SK-N-SH (cell line): ENCODE measurements at regions of chr14 and their contacts with region 1.

Region 1: DNA sequence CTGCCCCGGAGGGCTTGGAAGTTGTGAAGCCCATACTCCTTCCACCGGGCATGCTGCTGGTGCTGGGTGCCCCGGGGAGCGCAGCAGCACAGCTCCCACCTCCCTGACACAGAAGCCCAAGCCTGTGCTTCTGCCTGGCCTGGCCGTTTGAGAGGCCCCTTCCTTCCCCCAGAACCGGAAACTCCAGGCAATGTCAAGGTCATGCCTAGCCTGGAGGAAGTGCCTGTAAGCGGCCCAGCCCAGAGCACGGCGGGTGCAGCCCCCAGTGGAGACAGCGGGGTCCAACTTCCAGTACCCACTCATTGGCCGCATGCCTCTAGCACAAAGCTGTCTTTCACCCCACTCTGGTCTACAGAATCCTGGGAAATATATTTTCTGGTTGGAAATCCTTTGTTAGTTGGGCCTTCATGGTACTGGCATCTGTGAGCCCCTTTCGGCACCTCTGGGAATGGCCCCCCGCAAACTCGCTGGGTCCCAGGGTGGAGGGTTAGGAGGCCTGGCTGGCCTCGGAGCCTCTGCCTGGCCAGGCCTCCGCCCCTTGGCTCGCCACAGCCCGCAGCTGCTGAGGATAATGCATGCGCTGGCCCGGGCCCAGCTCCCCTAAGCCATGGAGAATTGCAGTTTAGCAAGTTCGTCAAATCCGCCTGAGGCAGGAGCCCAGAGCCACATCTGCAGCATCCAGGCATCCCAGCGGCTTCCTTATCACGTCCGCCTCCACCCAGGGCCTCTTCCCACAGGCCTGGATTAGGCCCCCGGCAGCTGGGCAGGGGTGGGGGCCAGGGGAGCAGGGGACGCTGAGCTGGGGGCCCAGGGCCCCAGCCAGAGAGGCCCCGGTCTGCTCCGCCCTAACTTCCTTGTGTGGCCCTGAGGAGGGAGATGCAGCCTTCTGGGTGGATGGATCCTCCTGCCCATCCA is 48.9 kb upstream of the DLK1 start:
- DNase-seq: peak; percentile 89
- H3K4me3 ChIP-seq: no peak overlapping the region
- H3K27ac ChIP-seq: peak overlapping the region in 1 of 2 experiments; percentile 99; a peak in 3 of 4 replicates
- H3K4me1 ChIP-seq: peaks cover 0 to 97% of the 10 kb centered on the region in 2 experiments; a peak in 2 of 4 replicates
- H3K27me3 ChIP-seq: no peaks in the 10 kb centered on the region
- CTCF ChIP-seq: no peak
- EP300 ChIP-seq: peak in 1 of 2 experiments; percentile 77; a peak in 2 of 4 replicates
- RAD21 ChIP-seq: peak; percentile 2; the same call in 1 of the 2 replicates

Region 2: GRCh38 chr14:100392356-100392755 is 285.5 kb before region 1 on chr14:
- CTCF ChIA-PET with region 1: interaction called, 3 read pairs
- POLR2A ChIA-PET with region 1: interaction called, 11 read pairs
- DNase-seq: no peak
- H3K4me3 ChIP-seq: no peak overlapping the region
- H3K27ac ChIP-seq: peak overlapping the region in 1 of 2 experiments; percentile 88; a peak in 2 of 4 replicates
- H3K4me1 ChIP-seq: peaks cover 12 to 81% of the 10 kb centered on the region in 2 experiments; a peak in 3 of 4 replicates
- H3K27me3 ChIP-seq: no peaks in the 10 kb centered on the region
- CTCF ChIP-seq: no peak
- EP300 ChIP-seq: no peak
- RAD21 ChIP-seq: no peak

Region 3: GRCh38 chr14:100567009-100567876 is 110.6 kb before region 1 on chr14:
- CTCF ChIA-PET with region 1: interaction called, 3 read pairs
- POLR2A ChIA-PET with region 1: interaction called, 32 read pairs
- DNase-seq: peak; percentile 85
- H3K4me3 ChIP-seq: peak overlapping the region; percentile 58 to 59; a peak in 3 of 4 replicates
- H3K27ac ChIP-seq: peak overlapping the region in 1 of 2 experiments; percentile 94; a peak in 2 of 4 replicates
- H3K4me1 ChIP-seq: peaks cover 0 to 66% of the 10 kb centered on the region in 2 experiments; a peak in 1 of 4 replicates
- H3K27me3 ChIP-seq: peaks cover 18% of the 10 kb centered on the region
- CTCF ChIP-seq: no peak
- EP300 ChIP-seq: no peak
- RAD21 ChIP-seq: no peak

Region 4: GRCh38 chr14:100692859-100693558 is 15.2 kb after region 1 on chr14:
- CTCF ChIA-PET with region 1: interaction called, 5 read pairs
- POLR2A ChIA-PET with region 1: interaction called, 16 read pairs
- DNase-seq: no peak
- H3K4me3 ChIP-seq: peak overlapping the region in 1 of 2 experiments; percentile 44; a peak in 2 of 4 replicates
- H3K27ac ChIP-seq: peak overlapping the region; percentile 91 to 94
- H3K4me1 ChIP-seq: peaks cover 55 to 83% of the 10 kb centered on the region in 2 experiments
- H3K27me3 ChIP-seq: no peaks in the 10 kb centered on the region
- CTCF ChIP-seq: no peak
- EP300 ChIP-seq: peak in 1 of 2 experiments; percentile 87; a peak in 2 of 4 replicates
- RAD21 ChIP-seq: no peak

Region 5: GRCh38 chr14:100736234-100737180 is 58.7 kb after region 1 on chr14:
- CTCF ChIA-PET with region 1: interaction called, 4 read pairs
- POLR2A ChIA-PET with region 1: interaction called, 103 read pairs
- DNase-seq: peak; percentile 69
- H3K4me3 ChIP-seq: no peak overlapping the region
- H3K27ac ChIP-seq: peak overlapping the region in 1 of 2 experiments; percentile 17; a peak in 2 of 4 replicates
- H3K4me1 ChIP-seq: peaks cover 0 to 40% of the 10 kb centered on the region in 2 experiments; a peak in 1 of 4 replicates
- H3K27me3 ChIP-seq: no peaks in the 10 kb centered on the region
- CTCF ChIP-seq: no peak
- EP300 ChIP-seq: no peak
- RAD21 ChIP-seq: no peak

Region 6: GRCh38 chr14:100747021-100747586 is 69.3 kb after region 1 on chr14:
- CTCF ChIA-PET with region 1: no interaction called
- POLR2A ChIA-PET with region 1: no interaction called
- DNase-seq: no peak
- H3K4me3 ChIP-seq: no peak overlapping the region
- H3K27ac ChIP-seq: no peak overlapping the region
- H3K4me1 ChIP-seq: no peaks in the 10 kb centered on the region; a peak in 1 of 4 replicates
- H3K27me3 ChIP-seq: no peaks in the 10 kb centered on the region
- CTCF ChIP-seq: no peak
- EP300 ChIP-seq: no peak
- RAD21 ChIP-seq: no peak; the same call in 1 of the 2 replicates

Region 7: DNA sequence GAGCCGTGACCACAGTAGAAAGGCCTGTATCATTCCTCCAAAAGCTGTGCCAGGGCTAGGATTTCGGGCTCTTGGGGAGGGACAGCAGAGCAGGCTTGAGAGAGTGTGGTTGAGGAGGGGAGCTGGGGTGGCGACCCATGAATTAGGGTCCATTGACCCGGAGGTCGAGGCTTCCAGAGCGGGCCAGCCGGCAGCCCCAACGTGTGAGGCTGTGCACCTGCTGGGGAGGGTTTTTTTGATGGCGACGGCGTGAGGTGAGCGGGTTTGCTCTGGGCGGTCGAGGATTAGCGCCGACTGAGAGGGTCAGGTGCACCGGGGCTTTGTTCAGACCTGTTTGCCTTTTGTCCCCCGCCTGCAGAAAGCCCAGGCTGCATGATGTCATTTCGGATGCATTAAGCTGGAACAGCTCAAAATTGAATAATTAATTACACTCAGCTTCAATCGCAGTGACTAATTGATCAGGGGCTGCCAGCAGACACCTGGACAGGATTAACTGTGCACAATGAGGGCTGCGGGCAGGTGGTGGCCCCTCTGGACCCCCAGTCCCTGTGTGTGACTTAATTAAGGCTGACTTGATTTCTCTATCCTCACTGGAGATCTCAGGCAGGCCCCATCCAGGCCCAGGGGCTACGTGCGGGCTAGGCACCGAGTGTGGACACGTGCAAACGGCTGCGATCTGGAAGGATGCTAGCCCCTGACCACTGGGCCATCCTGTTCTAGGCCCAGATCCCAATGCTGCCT is 106.0 kb after region 1 on chr14:
- CTCF ChIA-PET with region 1: interaction called, 6 read pairs
- POLR2A ChIA-PET with region 1: interaction called, 39 read pairs
- DNase-seq: peak; percentile 84
- H3K4me3 ChIP-seq: no peak overlapping the region
- H3K27ac ChIP-seq: peak overlapping the region in 1 of 2 experiments; percentile 100; a peak in 2 of 4 replicates
- H3K4me1 ChIP-seq: peaks cover 0 to 87% of the 10 kb centered on the region in 2 experiments; a peak in 1 of 4 replicates
- H3K27me3 ChIP-seq: no peaks in the 10 kb centered on the region
- CTCF ChIP-seq: no peak
- EP300 ChIP-seq: peak in 1 of 2 experiments; percentile 98; a peak in 2 of 4 replicates
- RAD21 ChIP-seq: peak; percentile 23